Tibial artery (tissue), 4 donors: ENCODE measurements at regions of chr1 and their contacts with region 1.

Region 1: GRCh38 chr1:173476664-173477285 is 360 bp upstream of the PRDX6 start:
- DNase-seq: peak; percentile 92 to 95
- H3K4me3 ChIP-seq: peak overlapping the region; percentile 90 to 97
- H3K27ac ChIP-seq: peak overlapping the region; percentile 99 to 100
- H3K4me1 ChIP-seq: peaks cover 0 to 61% (median 38%) of the 10 kb centered on the region in 4 donors
- H3K27me3 ChIP-seq: no peaks in the 10 kb centered on the region
- CTCF ChIP-seq: peak in 1 of 2 experiments; percentile 9

Region 2: GRCh38 chr1:172343240-172344160 is 1133.3 kb before region 1 on chr1:
- intact Hi-C with region 1: no loop called
- DNase-seq: no peak
- H3K4me3 ChIP-seq: peak overlapping the region; percentile 17 to 28
- H3K27ac ChIP-seq: peak overlapping the region; percentile 57 to 62
- H3K4me1 ChIP-seq: peaks cover 0 to 18% (median 13%) of the 10 kb centered on the region in 4 donors
- H3K27me3 ChIP-seq: no peaks in the 10 kb centered on the region
- CTCF ChIP-seq: no peak

Region 3: GRCh38 chr1:173429471-173430402 is 47.0 kb before region 1 on chr1:
- intact Hi-C with region 1: loop called (anchors 5 kb)
- DNase-seq: peak; percentile 88 to 90
- H3K4me3 ChIP-seq: peak overlapping the region; percentile 25 to 30
- H3K27ac ChIP-seq: peak overlapping the region; percentile 69 to 77
- H3K4me1 ChIP-seq: peaks cover 0 to 25% (median 15%) of the 10 kb centered on the region in 4 donors
- H3K27me3 ChIP-seq: no peaks in the 10 kb centered on the region
- CTCF ChIP-seq: peak; percentile 39 to 44

Region 4: GRCh38 chr1:173714759-173715537 is 238.2 kb after region 1 on chr1 and contains the start of gene KLHL20:
- intact Hi-C with region 1: loop called (anchors 10 kb)
- DNase-seq: peak; percentile 80 to 87
- H3K4me3 ChIP-seq: peak within 1 kb of the TSS; percentile 84 to 96
- H3K27ac ChIP-seq: peak within 1 kb of the TSS; percentile 93 to 95
- H3K4me1 ChIP-seq: peaks cover 0 to 23% (median 13%) of the 10 kb centered on the region in 4 donors
- H3K27me3 ChIP-seq: peaks cover 0 to 5% of the 10 kb centered on the region in 2 donors
- CTCF ChIP-seq: no peak

Region 5: DNA sequence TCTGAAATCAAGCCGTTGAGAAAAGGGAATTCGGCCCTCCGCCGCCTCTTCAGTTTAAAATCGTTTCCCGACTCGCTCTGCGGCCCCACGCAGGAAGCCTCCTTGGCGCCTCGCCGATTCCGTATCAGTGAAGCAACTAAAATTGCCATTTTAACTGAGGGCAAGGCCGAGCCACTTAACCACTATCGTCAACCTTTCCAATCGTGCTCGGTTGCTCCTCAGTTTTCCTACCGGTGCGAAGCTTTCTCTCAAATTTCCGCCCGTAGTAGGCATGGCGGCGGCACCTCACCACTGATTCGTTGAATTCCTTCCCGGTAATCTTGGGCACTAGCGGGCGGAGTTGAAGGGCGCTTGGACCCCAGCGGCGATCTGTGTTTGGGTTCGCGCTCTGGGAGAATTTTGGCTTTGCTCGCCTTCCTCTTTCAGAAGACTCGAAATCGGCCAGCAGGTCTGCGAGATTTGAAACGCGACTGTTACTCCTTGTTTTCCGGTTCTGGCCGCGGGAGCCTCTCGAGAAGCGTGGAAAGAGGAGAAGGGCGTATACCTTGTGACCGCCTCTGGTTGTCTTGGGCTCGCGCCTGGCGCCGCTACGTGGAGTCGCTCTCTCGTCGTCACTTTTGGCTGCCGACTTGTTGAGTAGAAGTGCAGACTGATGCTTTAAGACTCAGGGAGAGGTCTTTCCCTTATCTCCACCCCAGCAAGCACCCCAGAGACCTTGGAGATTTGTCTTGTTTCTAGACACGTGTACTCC is 347.7 kb after region 1 on chr1 and contains the starts of genes CENPL and DARS2:
- intact Hi-C with region 1: loop called (anchors 5 kb)
- DNase-seq: peak; percentile 97 to 98
- H3K4me3 ChIP-seq: peak within 1 kb of the TSS; percentile 66 to 74
- H3K27ac ChIP-seq: peak within 1 kb of the TSS; percentile 86 to 95
- H3K4me1 ChIP-seq: peaks cover 0 to 27% (median 9%) of the 10 kb centered on the region in 4 donors
- H3K27me3 ChIP-seq: no peaks in the 10 kb centered on the region
- CTCF ChIP-seq: no peak

Region 6: DNA sequence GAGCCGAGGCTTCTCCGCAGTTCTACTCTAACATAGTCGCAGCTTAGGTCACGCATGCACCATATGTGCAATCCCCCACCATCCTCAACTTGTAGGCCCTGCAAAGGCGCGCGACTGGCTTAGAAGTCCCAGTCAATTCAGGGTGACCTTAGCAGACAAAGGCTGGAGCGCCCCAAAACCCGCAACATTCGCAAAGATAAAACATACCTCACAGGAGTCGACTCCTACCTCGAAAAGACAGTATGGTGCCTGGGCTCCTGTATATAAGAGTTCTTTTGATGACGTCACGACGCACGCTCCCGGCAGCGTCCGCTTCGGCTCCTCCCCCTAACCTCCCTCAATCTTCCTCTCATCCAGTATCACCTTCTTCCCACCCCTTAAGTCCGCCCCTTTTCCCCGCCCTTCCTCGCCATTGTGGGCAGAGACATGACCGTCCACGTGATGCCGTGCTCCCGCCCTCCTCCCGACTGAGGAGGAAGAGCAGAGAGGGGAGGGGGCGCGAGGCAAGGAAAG is 391.0 kb after region 1 on chr1 and contains the start of gene GAS5:
- intact Hi-C with region 1: loop called (anchors 2 kb)
- DNase-seq: peak; percentile 99 to 100
- H3K4me3 ChIP-seq: peak within 1 kb of the TSS; percentile 80 to 81
- H3K27ac ChIP-seq: peak within 1 kb of the TSS; percentile 94 to 95
- H3K4me1 ChIP-seq: peaks cover 0 to 33% (median 9%) of the 10 kb centered on the region in 4 donors
- H3K27me3 ChIP-seq: no peaks in the 10 kb centered on the region
- CTCF ChIP-seq: no peak

Region 7: GRCh38 chr1:174022080-174022975 is 545.6 kb after region 1 on chr1 and contains the start of gene RC3H1:
- intact Hi-C with region 1: loop called (anchors 10 kb)
- DNase-seq: peak; percentile 89 to 94
- H3K4me3 ChIP-seq: peak within 1 kb of the TSS; percentile 79 to 86
- H3K27ac ChIP-seq: peak within 1 kb of the TSS; percentile 87 to 91
- H3K4me1 ChIP-seq: peaks cover 0 to 46% (median 20%) of the 10 kb centered on the region in 4 donors
- H3K27me3 ChIP-seq: no peaks in the 10 kb centered on the region
- CTCF ChIP-seq: no peak